Caco-2 (cell line): ENCODE measurements at regions of chr2 and their contacts with region 1.

Region 1: DNA sequence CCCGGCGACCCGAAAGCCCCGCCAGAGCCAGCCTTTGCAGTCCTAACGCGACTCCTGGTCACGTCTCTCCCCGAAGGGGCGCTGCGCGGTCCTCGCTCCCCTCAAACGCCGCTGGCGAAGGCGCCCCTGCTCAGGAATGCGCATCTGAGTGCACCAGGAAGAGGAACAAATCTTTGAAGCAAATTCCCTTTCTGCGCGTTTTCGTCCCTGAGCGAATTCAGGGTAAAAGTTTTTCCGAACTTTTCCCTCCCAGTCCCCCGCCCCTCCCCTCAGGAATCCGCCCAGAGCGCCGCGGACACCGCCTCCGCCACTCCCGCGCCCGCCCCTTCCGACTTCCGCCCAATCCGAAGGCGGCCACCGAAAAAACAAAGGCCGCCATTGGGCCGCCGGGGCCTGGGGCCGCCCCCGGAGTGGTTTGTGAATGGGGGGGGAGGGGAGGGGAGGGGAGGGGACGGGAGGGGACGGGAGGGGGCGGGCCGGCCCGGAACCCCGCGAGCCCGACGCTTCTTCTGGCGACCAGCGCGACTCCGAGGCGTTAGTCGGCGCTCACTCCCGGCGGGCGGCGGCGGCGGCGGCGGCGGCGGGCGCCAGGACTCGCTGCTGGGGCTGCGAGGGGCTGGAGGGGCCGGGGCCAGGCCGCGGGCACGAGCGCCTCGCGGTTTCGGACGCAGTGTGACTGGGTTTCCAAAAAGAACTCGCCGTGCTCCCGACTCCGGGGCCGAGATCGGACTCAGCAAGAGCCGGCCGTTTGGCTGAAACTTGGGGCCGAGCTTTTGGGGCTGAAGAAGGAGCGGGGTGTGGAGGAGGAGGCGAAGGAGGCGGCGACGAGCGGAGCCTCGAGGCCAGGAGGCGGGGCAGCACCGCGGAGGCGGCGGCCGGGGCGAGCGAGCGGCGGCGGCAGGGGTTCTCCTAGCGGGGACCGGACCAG is at the start of gene FZD7:
- DNase-seq: peak; percentile 96 to 97
- H3K4me3 ChIP-seq: peak within 1 kb of the TSS; percentile 85
- H3K4me3 Mint-ChIP-seq: no peak within 1 kb of the TSS
- H3K27ac Mint-ChIP-seq: peak within 1 kb of the TSS; percentile 96
- H3K4me1 ChIP-seq: peaks cover 33% of the 10 kb centered on the region
- H3K4me1 Mint-ChIP-seq: peaks cover 5% of the 10 kb centered on the region
- H3K27me3 ChIP-seq: no peaks in the 10 kb centered on the region
- H3K27me3 Mint-ChIP-seq: no peaks in the 10 kb centered on the region
- CTCF ChIP-seq: peak; percentile 33 to 44
- total RNA-seq, gene FZD7: 40.4 and 41.4 TPM in 2 replicates

Region 2: GRCh38 chr2:201860636-201861066 is 172.9 kb before region 1 on chr2:
- CTCF ChIA-PET with region 1: interaction called, 3 read pairs
- POLR2A ChIA-PET with region 1: no interaction called
- intact Hi-C with region 1: loop called (anchors 1 kb)
- DNase-seq: peak; percentile 60 to 77
- H3K4me3 ChIP-seq: no peak overlapping the region
- H3K4me3 Mint-ChIP-seq: no peak overlapping the region
- H3K27ac Mint-ChIP-seq: no peak overlapping the region
- H3K4me1 ChIP-seq: peaks cover 14% of the 10 kb centered on the region
- H3K4me1 Mint-ChIP-seq: peaks cover 18% of the 10 kb centered on the region
- H3K27me3 ChIP-seq: no peaks in the 10 kb centered on the region
- H3K27me3 Mint-ChIP-seq: no peaks in the 10 kb centered on the region
- CTCF ChIP-seq: peak; percentile 79 to 83

Region 3: GRCh38 chr2:201909961-201910361 is 123.6 kb before region 1 on chr2:
- CTCF ChIA-PET with region 1: no interaction called
- POLR2A ChIA-PET with region 1: no interaction called
- intact Hi-C with region 1: loop called (anchors 5 kb)
- DNase-seq: no peak
- H3K4me3 ChIP-seq: no peak overlapping the region
- H3K4me3 Mint-ChIP-seq: no peak overlapping the region
- H3K27ac Mint-ChIP-seq: peak overlapping the region; percentile 35
- H3K4me1 ChIP-seq: peaks cover 61% of the 10 kb centered on the region
- H3K4me1 Mint-ChIP-seq: peaks cover 41% of the 10 kb centered on the region
- H3K27me3 ChIP-seq: no peaks in the 10 kb centered on the region
- H3K27me3 Mint-ChIP-seq: no peaks in the 10 kb centered on the region
- CTCF ChIP-seq: no peak

Region 4: GRCh38 chr2:201996006-201996405 is 37.6 kb before region 1 on chr2:
- CTCF ChIA-PET with region 1: no interaction called
- POLR2A ChIA-PET with region 1: no interaction called
- intact Hi-C with region 1: loop called (anchors 1 kb)
- DNase-seq: peak in 1 of 2 experiments; percentile 24
- H3K4me3 ChIP-seq: no peak overlapping the region
- H3K4me3 Mint-ChIP-seq: peak overlapping the region; percentile 9
- H3K27ac Mint-ChIP-seq: peak overlapping the region; percentile 62
- H3K4me1 ChIP-seq: peaks cover 26% of the 10 kb centered on the region
- H3K4me1 Mint-ChIP-seq: peaks cover 43% of the 10 kb centered on the region
- H3K27me3 ChIP-seq: no peaks in the 10 kb centered on the region
- H3K27me3 Mint-ChIP-seq: no peaks in the 10 kb centered on the region
- CTCF ChIP-seq: no peak

Region 5: DNA sequence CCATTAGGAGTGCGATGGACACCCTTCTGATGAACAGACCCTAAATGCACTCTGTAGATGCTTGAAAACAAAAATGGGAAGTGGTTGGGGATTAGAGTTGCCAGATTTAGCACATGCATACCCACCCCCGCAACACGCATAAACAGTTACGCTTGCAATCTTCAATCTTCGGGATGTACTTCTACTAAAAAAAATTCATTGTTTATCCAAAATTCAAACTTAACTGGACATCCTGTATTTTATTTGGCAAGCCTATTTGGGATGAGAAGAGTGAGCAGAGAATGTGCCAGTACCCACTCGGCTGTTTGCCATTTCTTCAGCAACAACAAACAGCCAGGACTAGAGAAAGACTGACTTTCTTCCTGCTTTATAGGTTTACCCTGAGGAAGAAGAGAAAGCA is 57.9 kb after region 1 on chr2:
- CTCF ChIA-PET with region 1: no interaction called
- POLR2A ChIA-PET with region 1: no interaction called
- intact Hi-C with region 1: no loop called
- DNase-seq: no peak
- H3K4me3 ChIP-seq: no peak overlapping the region
- H3K4me3 Mint-ChIP-seq: no peak overlapping the region
- H3K27ac Mint-ChIP-seq: no peak overlapping the region
- H3K4me1 ChIP-seq: no peaks in the 10 kb centered on the region
- H3K4me1 Mint-ChIP-seq: peaks cover 6% of the 10 kb centered on the region
- H3K27me3 ChIP-seq: no peaks in the 10 kb centered on the region
- H3K27me3 Mint-ChIP-seq: no peaks in the 10 kb centered on the region
- CTCF ChIP-seq: no peak

Region 6: DNA sequence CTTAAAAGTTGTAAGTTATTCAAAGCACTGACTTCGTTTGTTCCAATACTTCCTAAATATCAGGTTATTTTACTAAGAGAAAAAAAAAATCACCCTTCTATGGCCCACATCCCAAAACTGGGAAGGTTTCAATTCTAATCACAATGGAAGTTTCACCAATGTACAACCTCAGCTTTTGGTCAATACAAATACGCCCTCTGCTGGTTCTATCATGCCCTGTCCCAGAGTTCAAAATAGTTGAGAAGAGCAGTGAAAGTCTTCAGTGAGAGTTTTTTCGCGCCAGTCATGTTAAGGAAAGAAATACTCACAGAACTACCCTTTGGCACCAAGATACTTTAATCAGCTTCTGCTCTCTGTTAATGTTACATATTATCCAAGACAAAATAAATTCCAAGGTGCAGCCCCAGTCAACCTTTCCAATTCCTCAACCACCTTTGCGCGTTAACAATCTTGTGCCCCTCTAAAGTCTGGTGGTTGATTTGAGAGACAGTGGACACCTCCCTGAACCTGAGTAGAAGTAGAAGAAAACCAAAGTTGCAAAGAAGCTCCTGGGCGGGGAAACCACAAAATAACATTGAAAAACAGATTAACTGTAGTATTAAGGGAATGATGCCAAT is 144.9 kb after region 1 on chr2:
- CTCF ChIA-PET with region 1: no interaction called
- POLR2A ChIA-PET with region 1: no interaction called
- intact Hi-C with region 1: loop called (anchors 5 kb)
- DNase-seq: peak; percentile 62 to 77
- H3K4me3 ChIP-seq: no peak overlapping the region
- H3K4me3 Mint-ChIP-seq: no peak overlapping the region
- H3K27ac Mint-ChIP-seq: no peak overlapping the region
- H3K4me1 ChIP-seq: no peaks in the 10 kb centered on the region
- H3K4me1 Mint-ChIP-seq: no peaks in the 10 kb centered on the region
- H3K27me3 ChIP-seq: no peaks in the 10 kb centered on the region
- H3K27me3 Mint-ChIP-seq: no peaks in the 10 kb centered on the region
- CTCF ChIP-seq: peak; percentile 75 to 91